Right lobe of liver (tissue), 6 donors: ENCODE measurements at regions of chr2 and their contacts with region 1.

Region 1: GRCh38 chr2:43226558-43226954 is at the start of gene ZFP36L2:
- DNase-seq: peak; percentile 98 to 99 (median 99)
- ATAC-seq: peak; percentile 58 to 81 (median 68)
- H3K4me3 ChIP-seq: peak within 1 kb of the TSS; percentile 81 to 92 (median 84)
- H3K27ac ChIP-seq: peak within 1 kb of the TSS; percentile 97 to 98 (median 98)
- H3K4me1 ChIP-seq: peaks cover 2 to 41% (median 17%) of the 10 kb centered on the region in 4 donors
- H3K27me3 ChIP-seq: no peaks in the 10 kb centered on the region
- CTCF ChIP-seq: no peak
- POLR2A ChIP-seq: peak; percentile 99
- total RNA-seq, gene ZFP36L2: 20.8 to 50.0 (median 33.6) TPM

Region 2: DNA sequence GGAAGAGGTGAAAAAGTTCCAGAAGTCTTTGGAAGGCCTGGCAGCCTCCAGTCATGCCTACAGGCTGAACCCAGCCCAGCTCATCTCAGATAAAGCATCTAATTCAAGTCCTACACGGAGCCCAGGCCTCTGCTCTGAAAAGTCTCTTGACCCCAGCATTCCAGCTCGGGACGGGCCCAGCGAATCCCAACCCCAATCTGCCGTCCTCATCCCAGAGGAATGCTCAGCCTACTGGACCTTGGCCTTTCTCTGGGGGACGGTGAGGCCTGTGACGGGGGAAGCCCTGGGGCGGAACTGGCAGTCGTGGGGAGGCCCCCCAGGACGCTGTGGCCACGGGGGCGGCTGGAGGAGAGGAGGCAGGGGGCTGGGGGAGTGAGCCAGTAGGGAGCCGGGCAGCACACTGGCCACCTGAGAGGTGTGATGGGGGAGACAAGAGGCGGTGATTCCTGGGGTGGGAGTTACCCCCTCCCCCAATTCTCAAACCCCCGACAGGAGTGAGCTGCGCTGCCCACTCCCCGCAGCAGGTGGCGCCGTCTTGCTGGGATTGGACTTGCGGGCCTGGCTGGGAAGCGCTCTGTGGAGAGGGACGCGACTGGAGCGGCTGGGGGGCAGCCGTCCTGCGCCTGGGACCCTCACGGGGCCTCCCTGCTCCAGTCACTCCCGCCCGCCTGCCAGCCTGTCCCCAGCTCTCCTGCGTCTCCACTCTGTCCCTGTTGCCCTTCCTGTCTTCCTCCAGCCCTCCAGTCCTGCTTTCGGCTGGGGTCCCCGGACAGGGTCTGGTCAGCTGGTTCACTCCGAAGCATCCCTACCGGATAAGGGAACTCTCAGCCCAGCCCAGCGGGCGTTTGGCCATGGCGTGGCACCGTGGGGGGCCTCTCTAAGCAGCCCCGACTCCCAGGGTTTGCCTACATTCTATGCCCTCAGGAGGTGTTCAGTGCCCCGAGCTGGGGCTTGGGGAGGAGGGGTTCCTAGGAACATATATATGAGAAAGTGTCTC is 251.5 kb before region 1 on chr2:
- intact Hi-C with region 1: loop called (anchors 10 kb)
- DNase-seq: peak; percentile 79 to 82 (median 80)
- ATAC-seq: peak; percentile 62 to 70 (median 66)
- H3K4me3 ChIP-seq: peak overlapping the region; percentile 24 to 47 (median 33)
- H3K27ac ChIP-seq: peak overlapping the region in 2 of 3 donors; percentile 65 to 67
- H3K4me1 ChIP-seq: peaks cover 0 to 31% (median 14%) of the 10 kb centered on the region in 4 donors
- H3K27me3 ChIP-seq: no peaks in the 10 kb centered on the region
- CTCF ChIP-seq: peak; percentile 82 to 93 (median 86)
- POLR2A ChIP-seq: no peak

Region 3: DNA sequence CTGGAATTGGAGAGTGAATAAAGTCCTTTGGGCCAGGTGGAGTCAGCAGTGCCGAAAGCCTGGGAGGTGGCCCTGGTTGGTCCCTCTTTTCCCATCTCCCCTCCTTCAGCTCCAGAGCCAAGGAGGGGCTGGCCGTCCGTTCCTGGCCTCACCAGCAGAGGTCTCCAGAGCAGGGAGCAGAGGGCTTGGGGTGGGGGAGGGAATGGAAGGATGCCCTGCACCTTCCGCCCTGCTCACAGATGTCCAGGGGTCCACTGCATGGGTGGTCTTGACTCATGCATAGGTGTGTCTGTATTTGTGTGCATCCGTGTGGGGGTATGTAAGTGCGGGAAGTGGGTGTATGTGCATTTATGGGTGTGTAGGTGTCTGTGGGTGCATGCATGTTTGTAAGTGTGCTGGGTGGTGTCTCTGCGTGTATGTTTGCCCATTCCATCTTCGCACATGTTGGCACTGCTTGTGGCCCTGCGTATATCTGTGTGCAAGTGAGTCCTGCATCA is 202.0 kb before region 1 on chr2:
- intact Hi-C with region 1: loop called in 1 of 2 experiments (anchors 10 kb)
- DNase-seq: peak in 2 of 3 donors; percentile 70
- ATAC-seq: peak; percentile 51 to 71 (median 56)
- H3K4me3 ChIP-seq: no peak overlapping the region
- H3K27ac ChIP-seq: no peak overlapping the region
- H3K4me1 ChIP-seq: peaks cover 0 to 15% (median 7%) of the 10 kb centered on the region in 4 donors
- H3K27me3 ChIP-seq: no peaks in the 10 kb centered on the region
- CTCF ChIP-seq: peak; percentile 65 to 80 (median 68)
- POLR2A ChIP-seq: no peak

Region 4: GRCh38 chr2:43169987-43170386 is 56.6 kb before region 1 on chr2:
- intact Hi-C with region 1: loop called in 1 of 2 experiments (anchors 10 kb)
- DNase-seq: peak in 1 of 3 donors; percentile 74
- ATAC-seq: peak; percentile 24 to 64 (median 49)
- H3K4me3 ChIP-seq: no peak overlapping the region
- H3K27ac ChIP-seq: peak overlapping the region in 2 of 3 donors; percentile 38 to 51
- H3K4me1 ChIP-seq: peaks cover 0 to 9% (median 0%) of the 10 kb centered on the region in 4 donors
- H3K27me3 ChIP-seq: no peaks in the 10 kb centered on the region
- CTCF ChIP-seq: peak; percentile 42 to 72 (median 56)
- POLR2A ChIP-seq: no peak

Region 5: GRCh38 chr2:43184339-43184895 is 42.1 kb before region 1 on chr2:
- intact Hi-C with region 1: no loop called
- DNase-seq: no peak
- ATAC-seq: peak in 2 of 4 donors; percentile 8 to 13
- H3K4me3 ChIP-seq: no peak overlapping the region
- H3K27ac ChIP-seq: no peak overlapping the region
- H3K4me1 ChIP-seq: peaks cover 0 to 3% (median 1%) of the 10 kb centered on the region in 4 donors
- H3K27me3 ChIP-seq: no peaks in the 10 kb centered on the region
- CTCF ChIP-seq: no peak
- POLR2A ChIP-seq: no peak

Region 6: DNA sequence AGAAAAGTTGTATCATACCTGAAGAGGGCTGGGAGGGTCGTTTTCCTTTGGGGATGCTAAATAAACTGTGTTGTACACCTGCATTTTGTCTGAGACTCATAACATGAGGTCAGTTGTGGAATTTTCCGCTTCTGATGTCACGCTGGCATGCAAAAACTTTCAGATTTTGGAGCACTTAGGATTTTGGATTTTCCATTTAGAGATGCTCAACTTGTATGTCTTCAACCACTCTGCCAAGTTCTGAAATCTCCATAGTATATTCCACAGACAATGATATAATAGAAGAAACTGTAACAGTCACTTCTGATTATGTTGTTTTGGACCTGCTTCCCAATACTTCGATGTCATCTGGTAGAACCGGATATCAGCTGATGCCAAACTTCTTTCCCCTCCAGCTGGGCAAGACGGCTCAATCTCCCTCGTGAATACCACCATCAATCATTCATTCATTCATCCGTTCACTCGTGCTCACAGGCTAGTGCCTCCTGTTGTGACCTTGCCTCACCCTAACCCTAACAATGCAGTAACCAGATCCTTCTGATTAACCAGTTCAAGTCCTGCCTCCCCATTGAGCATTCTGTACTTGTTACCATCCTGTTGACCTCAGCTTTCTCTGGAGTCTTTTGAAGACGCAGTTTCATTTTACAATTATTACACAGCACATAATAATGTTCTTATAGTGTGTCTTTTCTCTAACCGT is 405.2 kb after region 1 on chr2:
- intact Hi-C with region 1: no loop called
- DNase-seq: no peak
- ATAC-seq: no peak
- H3K4me3 ChIP-seq: no peak overlapping the region
- H3K27ac ChIP-seq: no peak overlapping the region
- H3K4me1 ChIP-seq: peaks cover 0 to 9% (median 4%) of the 10 kb centered on the region in 4 donors
- H3K27me3 ChIP-seq: no peaks in the 10 kb centered on the region
- CTCF ChIP-seq: no peak
- POLR2A ChIP-seq: no peak